Activated CD4-positive, alpha-beta T cell treated with anti-CD3 and anti-CD28 coated beads, Interleukin-2, amount 10 ng/mL, durations not matched to agents 24 days and 14 days (primary cell): ENCODE measurements at regions of chr3 and their contacts with region 1.

Region 1: DNA sequence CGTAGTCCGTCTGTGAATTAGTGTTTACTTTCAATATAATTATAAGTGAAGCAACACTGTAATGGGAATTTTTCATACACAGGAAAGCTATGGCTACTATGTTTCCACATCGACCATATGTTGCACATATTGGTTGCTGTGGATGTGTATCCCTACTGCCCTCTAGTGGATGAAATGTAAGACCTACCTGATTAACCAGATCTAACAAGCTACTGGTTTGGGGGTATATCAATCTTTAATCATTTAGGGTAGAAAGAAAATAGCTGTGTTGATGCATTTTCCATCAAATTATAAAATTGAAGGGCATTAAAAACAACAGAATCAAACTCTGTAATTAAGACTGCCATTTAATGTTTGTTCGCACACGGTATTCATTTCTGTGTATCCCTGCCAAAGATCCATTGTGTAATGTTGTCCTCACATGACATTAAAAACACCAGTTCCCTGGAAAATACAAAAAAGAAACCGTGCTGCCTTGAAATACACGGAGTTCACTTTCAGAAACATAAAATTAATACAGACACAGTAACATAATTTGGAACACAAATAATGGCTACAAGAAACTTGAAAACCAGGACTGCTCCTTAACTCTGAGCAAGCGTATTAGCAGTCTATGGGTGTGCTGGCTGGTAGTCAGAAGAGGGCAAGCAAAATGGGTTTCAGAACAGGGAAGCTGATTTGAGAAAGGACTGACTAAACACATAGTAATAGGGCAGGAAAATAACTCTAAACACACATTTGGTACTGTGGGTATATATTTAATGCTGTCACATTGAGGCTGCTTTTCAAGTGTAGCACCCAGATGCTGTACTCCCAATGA is 125.1 kb downstream of the TIGIT start:
- DNase-seq: peak; percentile 68
- H3K4me3 Mint-ChIP-seq: no peak overlapping the region
- H3K27ac Mint-ChIP-seq: peak overlapping the region; percentile 76
- H3K4me1 Mint-ChIP-seq: peaks cover 18% of the 10 kb centered on the region
- H3K27me3 Mint-ChIP-seq: no peaks in the 10 kb centered on the region

Region 2: DNA sequence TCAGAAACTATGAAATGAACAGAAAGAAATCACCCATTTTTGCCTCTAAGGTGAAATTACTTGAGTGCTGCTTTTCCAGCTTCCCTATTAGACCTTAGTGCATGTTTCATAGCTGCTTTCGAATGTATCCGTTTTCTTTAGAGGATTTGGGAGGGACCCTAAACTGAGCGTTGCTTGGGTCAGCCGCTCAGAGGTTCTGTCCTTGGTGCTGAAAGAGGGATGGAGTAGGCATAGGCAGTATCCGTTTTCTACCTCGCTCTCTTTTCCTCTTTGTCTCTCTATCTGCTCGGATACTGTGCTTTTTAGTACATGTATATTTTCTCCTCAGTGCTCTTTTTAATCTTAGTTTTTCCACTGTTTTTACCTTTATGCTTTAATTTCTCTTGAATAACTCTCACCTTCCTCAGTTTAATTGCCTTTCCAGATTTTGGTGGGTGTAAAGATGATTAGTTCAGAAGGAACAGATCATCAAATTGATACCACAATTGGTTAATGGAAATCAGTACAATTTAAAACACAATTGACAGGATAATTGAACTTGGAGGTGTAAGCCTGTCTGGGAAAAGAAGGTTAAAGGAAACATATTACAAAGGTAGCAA is 240.1 kb before region 1 on chr3 and contains the start of gene DRD3:
- intact Hi-C with region 1: no loop called
- DNase-seq: peak; percentile 72
- H3K4me3 Mint-ChIP-seq: no peak within 1 kb of the TSS
- H3K27ac Mint-ChIP-seq: no peak within 1 kb of the TSS
- H3K4me1 Mint-ChIP-seq: peaks cover 2% of the 10 kb centered on the region
- H3K27me3 Mint-ChIP-seq: peaks cover 19% of the 10 kb centered on the region
- total RNA-seq, gene DRD3: not detected in 2 replicates

Region 3: GRCh38 chr3:114213627-114214541 is 205.1 kb before region 1 on chr3:
- intact Hi-C with region 1: loop called (anchors 1 kb)
- DNase-seq: peak; percentile 89
- H3K4me3 Mint-ChIP-seq: no peak overlapping the region
- H3K27ac Mint-ChIP-seq: no peak overlapping the region
- H3K4me1 Mint-ChIP-seq: peaks cover 23% of the 10 kb centered on the region
- H3K27me3 Mint-ChIP-seq: no peaks in the 10 kb centered on the region

Region 4: DNA sequence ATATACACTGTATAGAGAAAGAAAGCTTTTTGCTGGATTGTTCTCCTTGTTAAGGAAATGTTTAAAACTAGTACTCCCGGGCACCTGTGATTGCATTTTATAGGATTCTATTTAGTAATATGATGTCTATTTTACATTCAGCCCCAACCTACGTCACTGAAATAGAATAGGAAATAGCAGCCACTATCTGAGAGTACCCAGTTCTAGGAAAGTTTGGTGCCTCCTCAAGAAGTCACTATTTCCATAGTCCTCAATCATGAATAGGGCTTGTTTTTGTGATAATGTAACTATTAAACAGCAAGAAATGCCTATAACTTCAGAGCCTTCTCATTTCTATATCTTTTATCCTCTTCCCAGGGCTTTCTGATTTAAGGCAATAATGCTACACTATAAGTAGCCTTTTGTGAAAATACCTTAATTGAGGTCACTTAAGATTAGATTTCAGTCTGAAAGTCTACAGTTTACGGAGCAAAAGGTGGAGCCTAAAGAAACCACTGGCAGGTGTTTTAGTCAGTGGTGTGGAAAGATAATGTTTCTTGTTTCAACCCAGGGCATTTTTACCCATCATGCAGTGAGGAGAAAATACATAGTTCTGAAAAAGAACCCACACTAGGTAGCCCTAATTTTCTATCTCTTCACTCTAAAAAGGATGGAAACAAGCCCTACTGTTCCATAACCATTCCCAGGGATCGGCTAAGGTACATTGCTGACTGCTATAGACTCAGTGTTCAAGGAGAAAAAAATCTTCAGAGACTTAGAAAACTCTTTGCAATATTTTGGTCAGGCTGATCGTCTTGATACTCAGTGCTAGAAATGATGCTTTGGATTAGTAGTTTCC is 86.4 kb before region 1 on chr3:
- intact Hi-C with region 1: loop called (anchors 2 kb)
- DNase-seq: no peak
- H3K4me3 Mint-ChIP-seq: no peak overlapping the region
- H3K27ac Mint-ChIP-seq: peak overlapping the region; percentile 89
- H3K4me1 Mint-ChIP-seq: peaks cover 42% of the 10 kb centered on the region
- H3K27me3 Mint-ChIP-seq: no peaks in the 10 kb centered on the region

Region 5: DNA sequence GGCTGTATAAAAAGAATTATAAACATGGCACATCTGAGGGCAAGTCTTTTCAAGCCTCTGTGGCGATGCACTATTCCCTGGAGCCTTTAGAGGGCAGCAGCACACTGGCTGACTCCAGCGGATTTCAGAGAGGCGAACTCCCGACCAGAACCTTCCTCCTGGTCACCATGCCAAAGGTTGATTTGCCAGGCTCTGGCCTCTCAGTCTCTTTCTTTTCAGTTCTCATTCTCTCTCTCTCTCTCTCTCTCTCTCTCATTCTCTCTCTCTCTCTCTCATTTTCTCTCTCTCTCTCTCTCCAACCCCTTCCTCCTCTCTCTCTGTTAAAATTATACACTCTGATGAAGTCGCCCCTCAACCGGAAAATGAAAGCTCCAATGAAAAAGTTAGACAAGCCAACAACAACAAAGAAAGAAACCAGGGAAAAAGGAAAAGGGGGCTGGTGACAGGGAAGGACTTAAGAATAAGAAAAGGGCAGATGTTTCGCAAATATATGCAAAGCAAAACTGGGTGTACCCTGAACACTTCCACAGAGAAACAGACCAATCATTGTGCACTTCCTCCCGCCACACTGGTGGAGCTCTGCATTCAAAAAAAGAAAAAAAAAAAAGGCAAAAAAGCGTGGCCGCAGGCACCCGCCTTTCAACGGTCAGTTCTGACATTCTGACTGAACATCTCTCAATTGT is 34.9 kb before region 1 on chr3:
- intact Hi-C with region 1: loop called (anchors 1 kb)
- DNase-seq: peak; percentile 89
- H3K4me3 Mint-ChIP-seq: peak overlapping the region; percentile 77
- H3K27ac Mint-ChIP-seq: peak overlapping the region; percentile 81
- H3K4me1 Mint-ChIP-seq: peaks cover 12% of the 10 kb centered on the region
- H3K27me3 Mint-ChIP-seq: no peaks in the 10 kb centered on the region

Region 6: DNA sequence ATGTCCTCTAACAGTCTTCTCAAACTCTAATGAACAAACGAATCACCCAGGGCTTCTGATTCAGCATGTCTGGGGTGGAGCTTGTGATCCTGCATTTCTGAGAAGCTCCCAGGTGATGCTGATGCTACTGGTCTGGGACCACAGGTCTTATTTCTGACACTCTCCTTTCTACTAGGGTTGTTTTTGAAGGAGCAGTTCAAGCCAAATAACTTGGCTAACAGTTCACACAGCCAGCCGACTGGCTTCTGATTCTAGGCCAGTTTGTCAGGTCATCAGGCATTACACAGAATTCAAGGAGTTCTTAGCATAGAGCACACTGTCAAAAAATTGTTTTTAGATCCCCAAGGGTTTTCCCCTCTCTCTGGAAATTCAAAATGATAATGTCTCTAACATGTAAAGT is 24.4 kb before region 1 on chr3:
- intact Hi-C with region 1: no loop called
- DNase-seq: no peak
- H3K4me3 Mint-ChIP-seq: no peak overlapping the region
- H3K27ac Mint-ChIP-seq: no peak overlapping the region
- H3K4me1 Mint-ChIP-seq: peaks cover 2% of the 10 kb centered on the region
- H3K27me3 Mint-ChIP-seq: no peaks in the 10 kb centered on the region